ENCODE measurements at regions of chr10 and their contacts with region 1.

Region 1: DNA sequence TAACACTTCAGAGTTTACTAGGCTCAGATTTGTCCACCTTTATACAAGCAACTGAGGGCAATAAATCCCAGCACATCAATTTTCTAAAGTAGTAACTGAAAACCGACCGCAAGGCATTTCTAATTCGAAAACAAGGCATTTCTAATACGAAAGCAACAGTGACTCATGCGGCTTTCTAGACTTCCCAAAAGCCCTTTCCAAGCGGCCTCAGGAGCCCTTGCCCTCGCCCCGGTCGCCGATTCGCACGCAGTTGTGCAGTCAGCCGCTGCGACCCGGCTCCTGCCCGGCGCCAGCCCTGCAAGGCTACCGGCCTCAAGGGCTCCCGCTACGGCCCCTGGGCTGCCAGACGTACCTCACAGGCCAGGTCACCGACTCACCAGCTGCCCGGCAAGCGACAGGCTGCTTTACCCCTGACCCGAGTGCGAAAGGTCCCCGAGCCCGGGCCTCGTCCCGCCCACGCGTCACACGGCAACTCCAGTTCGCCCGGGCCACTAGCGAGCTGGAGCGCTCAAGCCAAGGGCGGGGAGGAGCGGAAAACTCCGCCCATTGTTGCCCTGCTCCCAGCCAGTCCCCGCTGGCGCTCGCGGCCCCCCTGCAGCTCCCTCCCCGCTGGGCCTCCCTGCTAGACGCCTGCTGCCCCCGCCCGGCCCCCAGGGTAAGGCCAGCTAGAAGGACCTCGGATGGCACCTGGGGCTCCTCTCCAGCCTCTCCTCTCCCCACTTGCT is 7.3 kb downstream of the NCOA4 start:
- DNase-seq: peak; percentile 80
- H3K4me3 Mint-ChIP-seq: peak overlapping the region; percentile 79
- H3K27ac Mint-ChIP-seq: peak overlapping the region; percentile 74
- H3K4me1 Mint-ChIP-seq: peaks cover 70% of the 10 kb centered on the region
- H3K27me3 Mint-ChIP-seq: no peaks in the 10 kb centered on the region

Region 2: DNA sequence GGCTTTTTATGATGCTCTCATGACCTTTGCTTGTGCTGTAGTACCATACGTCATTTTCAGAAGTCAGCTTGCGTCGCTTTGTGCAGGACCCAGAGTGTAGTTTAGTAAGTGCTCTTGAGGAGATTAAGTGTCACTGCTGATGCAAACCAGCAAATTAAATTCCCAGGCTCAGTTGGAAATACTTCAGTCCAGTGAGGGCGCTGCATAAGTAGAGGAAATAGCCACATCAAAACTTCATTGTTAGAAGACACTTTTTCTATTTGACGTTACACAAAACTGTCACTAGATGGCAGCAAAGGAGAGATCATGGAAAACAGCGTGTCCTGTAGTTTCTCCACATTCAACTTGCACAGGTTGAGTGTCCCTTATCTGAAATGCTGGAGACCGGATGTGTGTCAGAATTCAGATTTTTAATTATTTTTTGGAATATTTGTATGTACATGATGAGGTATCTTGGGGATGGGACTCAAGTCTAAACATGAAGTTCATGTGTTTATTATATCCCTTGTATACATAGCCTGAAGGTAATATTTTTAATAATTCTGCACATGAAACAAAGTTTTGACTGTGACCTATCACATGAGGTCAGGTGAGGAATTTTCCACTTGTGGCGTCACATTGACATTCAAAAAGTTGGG is 1014.5 kb before region 1 on chr10:
- intact Hi-C with region 1: loop called (anchors 10 kb)
- DNase-seq: no peak
- H3K4me3 Mint-ChIP-seq: no peak overlapping the region
- H3K27ac Mint-ChIP-seq: no peak overlapping the region
- H3K4me1 Mint-ChIP-seq: no peaks in the 10 kb centered on the region
- H3K27me3 Mint-ChIP-seq: no peaks in the 10 kb centered on the region

Region 3: GRCh38 chr10:45420453-45421192 is 602.5 kb before region 1 on chr10:
- intact Hi-C with region 1: loop called (anchors 2 kb)
- DNase-seq: peak; percentile 65
- H3K4me3 Mint-ChIP-seq: peak overlapping the region; percentile 96
- H3K27ac Mint-ChIP-seq: peak overlapping the region; percentile 98
- H3K4me1 Mint-ChIP-seq: peaks cover 91% of the 10 kb centered on the region
- H3K27me3 Mint-ChIP-seq: no peaks in the 10 kb centered on the region

Region 4: GRCh38 chr10:46064271-46064957 is 41.3 kb after region 1 on chr10:
- intact Hi-C with region 1: no loop called
- DNase-seq: no peak
- H3K4me3 Mint-ChIP-seq: no peak overlapping the region
- H3K27ac Mint-ChIP-seq: no peak overlapping the region
- H3K4me1 Mint-ChIP-seq: no peaks in the 10 kb centered on the region
- H3K27me3 Mint-ChIP-seq: peaks cover 5% of the 10 kb centered on the region

Region 5: DNA sequence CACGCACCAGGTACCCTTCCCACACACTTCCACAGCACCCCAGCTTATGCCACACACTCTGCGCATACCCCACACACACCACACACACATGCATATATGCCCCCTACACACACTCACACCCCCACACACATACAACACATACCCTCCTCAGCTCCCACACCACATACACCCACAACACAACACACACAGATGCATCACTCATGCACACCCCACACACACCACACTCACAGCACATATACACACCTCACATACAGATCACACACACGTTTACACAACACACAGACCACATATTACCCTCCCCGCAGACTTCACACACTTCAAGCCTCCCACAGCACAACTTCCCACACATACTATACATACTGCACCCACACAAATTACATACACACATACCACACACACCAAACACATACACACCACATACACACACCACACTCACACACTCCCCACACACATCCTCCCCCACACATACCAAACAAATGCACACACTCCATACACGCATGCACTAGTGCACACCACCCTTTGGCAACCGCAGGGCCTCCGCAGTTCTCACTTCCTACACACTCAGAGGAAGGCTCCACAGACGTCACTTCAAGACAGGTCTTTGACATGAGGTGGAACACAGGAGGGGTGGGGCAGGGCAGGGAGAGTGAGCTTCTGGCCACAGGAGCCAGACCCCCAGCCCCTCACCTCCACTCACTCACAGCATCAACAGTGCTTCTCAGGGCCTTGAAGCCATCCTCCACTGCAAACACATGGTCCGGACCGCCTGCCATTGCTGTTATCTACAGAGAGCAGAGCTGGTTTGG is 245.1 kb after region 1 on chr10:
- intact Hi-C with region 1: loop called (anchors 5 kb)
- DNase-seq: peak; percentile 34
- H3K4me3 Mint-ChIP-seq: no peak overlapping the region
- H3K27ac Mint-ChIP-seq: no peak overlapping the region
- H3K4me1 Mint-ChIP-seq: peaks cover 26% of the 10 kb centered on the region
- H3K27me3 Mint-ChIP-seq: no peaks in the 10 kb centered on the region

Measured in activated T-helper 1 cell treated with anti-CD3 and anti-CD28 coated beads, Interleukin-12 subunit alpha, Interleukin-12 subunit beta, Interleukin-2, Interleukin-4 antibody, amounts not matched to agents 30 ng/mL and 10 ng/mL and 1 ng/mL, durations not matched to agents 14 hours and 24 hours and 36 hours (primary cell).